SK-N-SH (cell line): ENCODE measurements at regions of chr2 and their contacts with region 1.

Region 1: DNA sequence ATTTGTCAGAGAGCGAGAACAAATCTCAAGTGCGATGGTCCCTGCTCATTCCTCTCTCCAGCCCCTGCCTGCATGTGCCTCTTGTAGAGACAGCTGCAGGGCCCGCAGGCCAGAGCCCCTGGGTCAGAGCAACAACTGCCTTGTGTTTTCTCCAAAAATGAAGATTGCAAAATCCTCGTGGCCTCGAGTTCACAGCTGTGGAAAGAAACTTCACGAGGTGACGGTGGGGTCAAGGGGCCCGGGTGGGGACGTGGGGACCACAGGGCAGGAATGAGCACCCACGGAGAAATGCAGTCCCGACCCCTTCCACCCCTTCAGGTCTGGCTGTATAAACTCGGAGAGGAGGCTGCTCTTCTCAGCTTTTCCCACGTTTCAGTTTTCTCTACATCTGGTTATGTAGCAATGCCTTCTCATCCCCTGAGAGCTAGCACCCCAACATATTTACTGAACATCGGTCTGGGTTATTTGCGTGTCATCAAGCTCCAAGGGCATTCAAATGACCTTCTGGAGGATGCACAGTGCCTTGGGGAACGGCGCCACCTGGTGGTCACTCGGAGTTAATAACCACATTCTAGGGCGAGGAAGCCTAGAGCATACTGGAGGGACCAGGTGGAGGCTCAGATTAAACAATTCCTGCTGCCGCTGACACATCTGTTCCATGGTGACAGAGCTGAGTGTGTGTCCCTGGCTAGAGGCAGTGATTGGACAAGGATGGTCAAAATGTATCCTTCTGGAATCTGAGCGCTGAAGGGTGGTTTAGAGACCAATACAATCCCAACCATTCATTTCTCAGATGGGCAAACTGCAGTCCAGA is 91.4 kb upstream of the CYRIA start:
- DNase-seq: peak; percentile 79
- H3K4me3 ChIP-seq: peak overlapping the region in 1 of 2 experiments; percentile 27; a peak in 1 of 4 replicates
- H3K27ac ChIP-seq: no peak overlapping the region
- H3K4me1 ChIP-seq: peaks cover 0 to 4% of the 10 kb centered on the region in 2 experiments; a peak in 1 of 4 replicates
- H3K27me3 ChIP-seq: no peaks in the 10 kb centered on the region
- CTCF ChIP-seq: peak; percentile 95
- EP300 ChIP-seq: no peak
- RAD21 ChIP-seq: peak; percentile 99

Region 2: DNA sequence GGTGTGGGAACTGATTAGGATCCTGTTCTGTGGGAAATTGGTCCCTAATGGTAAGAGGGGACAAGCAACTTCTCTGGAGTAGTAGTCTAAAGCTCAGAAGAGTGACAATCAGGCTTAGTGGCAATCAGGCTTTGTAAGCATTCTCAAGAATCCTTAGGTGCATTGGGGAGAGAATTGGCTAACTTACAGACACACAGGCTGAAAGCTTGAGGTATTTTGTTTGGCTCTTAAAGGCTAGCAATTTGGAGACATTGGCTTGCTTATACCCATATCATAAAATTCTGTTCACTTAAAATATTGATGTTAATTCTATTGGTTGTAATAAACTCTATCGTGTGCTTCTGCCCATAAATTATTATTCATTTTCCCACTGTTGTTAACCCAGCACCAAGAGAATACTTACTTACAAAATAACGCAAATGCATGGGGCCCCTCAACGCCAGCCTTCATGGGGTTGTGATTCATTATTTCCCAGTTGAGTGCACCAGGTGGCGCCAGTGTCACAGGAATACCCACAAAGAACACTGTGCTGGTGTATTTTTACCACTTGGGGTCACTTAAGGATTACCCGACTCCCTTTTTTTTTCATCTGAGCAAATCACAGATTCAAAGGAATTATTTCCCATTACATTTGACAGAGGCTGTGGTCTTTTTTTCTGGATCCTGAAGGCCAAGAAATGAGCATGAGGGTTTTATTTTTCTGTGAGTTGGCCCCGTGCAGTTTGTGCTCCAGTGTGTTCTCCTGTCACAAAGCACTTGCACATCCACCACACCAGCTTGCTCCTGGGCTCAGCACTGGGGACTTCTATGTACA is 1119.9 kb before region 1 on chr2:
- CTCF ChIA-PET with region 1: interaction called, 11 read pairs
- POLR2A ChIA-PET with region 1: no interaction called
- DNase-seq: peak; percentile 87
- H3K4me3 ChIP-seq: no peak overlapping the region; a peak in 1 of 4 replicates
- H3K27ac ChIP-seq: peak overlapping the region in 1 of 2 experiments; percentile 70; a peak in 2 of 4 replicates
- H3K4me1 ChIP-seq: peaks cover 5 to 8% of the 10 kb centered on the region in 2 experiments; a peak in 1 of 4 replicates
- H3K27me3 ChIP-seq: no peaks in the 10 kb centered on the region
- CTCF ChIP-seq: peak; percentile 98
- EP300 ChIP-seq: no peak
- RAD21 ChIP-seq: peak; percentile 100

Region 3: DNA sequence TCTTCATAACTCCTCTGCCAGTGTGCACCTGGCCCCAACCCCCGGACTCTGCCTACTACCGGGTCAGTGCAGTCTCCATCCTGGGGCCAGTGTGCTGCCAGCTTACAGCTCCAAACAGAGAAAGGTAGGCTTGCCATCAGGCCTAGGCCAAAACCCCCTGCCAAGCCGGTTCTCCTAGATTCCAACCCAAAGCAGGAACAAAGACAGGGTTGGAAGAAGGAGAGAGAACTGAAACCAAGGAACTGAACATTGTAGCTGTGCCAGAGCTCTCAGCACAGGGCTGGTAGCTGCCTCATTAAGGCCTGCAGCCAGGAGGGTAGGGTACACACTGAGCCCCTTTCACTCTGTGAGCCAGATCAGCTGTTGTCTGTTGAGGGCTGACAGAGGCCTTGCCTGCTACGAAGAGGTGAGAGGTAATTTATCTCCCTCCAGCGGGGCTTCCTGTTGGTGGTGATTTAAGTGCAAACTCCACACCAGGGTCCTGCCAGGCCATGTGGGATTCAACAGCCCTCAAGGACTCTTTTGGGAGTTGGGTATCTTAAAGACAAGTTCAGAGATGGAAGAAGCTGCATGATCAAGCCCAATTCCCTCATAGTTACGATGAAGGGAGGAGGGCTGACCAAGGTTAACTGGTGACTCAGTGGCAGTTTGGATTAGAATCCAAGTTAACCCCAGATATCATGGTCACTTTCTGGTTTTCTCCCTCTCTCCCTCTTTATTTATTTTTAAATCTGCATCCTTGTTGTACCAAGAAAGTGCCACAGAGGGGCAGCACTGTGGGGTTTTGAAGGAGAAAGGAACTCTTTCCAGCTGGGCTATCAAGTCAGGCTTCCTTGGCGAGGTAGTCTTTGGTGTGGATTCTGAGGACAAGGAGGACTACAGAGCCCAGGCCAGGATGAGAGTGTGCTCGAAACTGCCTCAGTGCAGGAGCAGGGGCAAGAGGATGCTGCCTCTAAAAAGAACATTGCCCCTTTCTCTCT is 139.5 kb before region 1 on chr2:
- CTCF ChIA-PET with region 1: interaction called, 341 read pairs
- POLR2A ChIA-PET with region 1: interaction called, 12 read pairs
- DNase-seq: peak; percentile 56
- H3K4me3 ChIP-seq: no peak overlapping the region
- H3K27ac ChIP-seq: no peak overlapping the region
- H3K4me1 ChIP-seq: peaks cover 0 to 6% of the 10 kb centered on the region in 2 experiments; a peak in 2 of 4 replicates
- H3K27me3 ChIP-seq: no peaks in the 10 kb centered on the region; the same call in 1 of the 2 replicates
- CTCF ChIP-seq: peak; percentile 59
- EP300 ChIP-seq: no peak
- RAD21 ChIP-seq: peak; percentile 69

Region 4: DNA sequence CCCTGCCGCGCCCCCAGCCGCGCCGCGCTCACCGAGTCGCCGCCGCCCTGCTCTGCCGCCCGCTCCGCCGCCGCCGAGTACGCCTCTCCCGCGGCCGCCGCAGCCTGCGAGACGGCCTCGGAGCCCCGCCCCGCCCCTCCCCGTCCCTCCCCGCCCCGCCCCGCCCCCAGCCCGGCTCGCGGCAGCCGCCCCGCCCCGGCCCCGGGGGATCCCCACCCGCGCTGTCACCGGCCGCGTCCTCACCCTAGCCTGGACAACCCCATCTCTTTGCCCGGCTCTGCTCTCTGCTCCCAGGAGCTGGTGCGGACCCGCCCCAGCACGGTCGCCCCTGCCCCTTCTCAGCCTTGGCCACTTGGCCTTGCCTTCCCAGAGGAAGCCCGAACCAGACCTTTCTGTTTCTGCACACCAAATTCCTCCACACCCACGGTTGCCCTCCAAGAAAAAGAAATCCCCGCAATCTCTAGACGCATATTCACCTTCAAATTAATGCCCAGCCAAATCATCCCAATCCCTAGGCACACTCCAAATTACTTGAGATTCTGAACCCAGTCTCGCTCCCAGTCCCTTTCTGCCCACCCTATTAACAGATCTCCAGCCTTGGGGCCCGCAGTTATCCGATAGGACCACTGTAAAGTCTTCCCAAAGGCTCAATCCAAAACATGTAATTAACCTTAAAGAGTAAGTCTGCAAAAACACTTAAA is 91.1 kb before region 1 on chr2 and contains the start of gene CYRIA:
- CTCF ChIA-PET with region 1: interaction called, 48 read pairs
- POLR2A ChIA-PET with region 1: no interaction called
- DNase-seq: peak; percentile 91
- H3K4me3 ChIP-seq: peak within 1 kb of the TSS; percentile 49 to 57
- H3K27ac ChIP-seq: peak within 1 kb of the TSS in 1 of 2 experiments; percentile 53; a peak in 1 of 4 replicates
- H3K4me1 ChIP-seq: peaks cover 4 to 33% of the 10 kb centered on the region in 2 experiments; a peak in 2 of 4 replicates
- H3K27me3 ChIP-seq: peaks cover 13% of the 10 kb centered on the region; the same call in 1 of the 2 replicates
- CTCF ChIP-seq: no peak
- EP300 ChIP-seq: no peak
- RAD21 ChIP-seq: no peak
- polyA plus RNA-seq, gene CYRIA: 0.08 and 0.13 TPM in 2 replicates

Region 5: DNA sequence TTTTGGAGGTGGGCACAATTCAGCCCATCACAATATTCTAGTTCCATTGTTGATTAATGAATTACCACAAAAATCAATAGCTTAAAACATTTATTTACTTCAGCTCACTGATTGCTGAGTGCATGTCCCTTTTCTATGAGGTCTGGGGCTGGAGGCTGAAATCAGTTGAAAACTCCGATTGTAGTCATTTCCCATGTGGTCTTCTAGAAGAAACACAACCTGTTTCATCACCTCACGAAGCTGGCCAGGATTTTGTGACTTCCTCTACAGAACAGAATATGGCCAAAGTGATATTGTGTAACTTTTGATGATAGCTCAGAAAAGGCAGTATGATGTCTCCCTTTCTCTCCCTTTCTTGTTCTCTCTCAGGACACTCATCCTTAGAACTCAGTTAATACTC is 47.3 kb before region 1 on chr2:
- CTCF ChIA-PET with region 1: interaction called, 13 read pairs
- POLR2A ChIA-PET with region 1: no interaction called
- DNase-seq: no peak
- H3K4me3 ChIP-seq: no peak overlapping the region
- H3K27ac ChIP-seq: no peak overlapping the region
- H3K4me1 ChIP-seq: no peaks in the 10 kb centered on the region; a peak in 2 of 4 replicates
- H3K27me3 ChIP-seq: no peaks in the 10 kb centered on the region
- CTCF ChIP-seq: no peak
- EP300 ChIP-seq: no peak
- RAD21 ChIP-seq: no peak

Region 6: GRCh38 chr2:16745466-16745865 is 11.6 kb before region 1 on chr2:
- CTCF ChIA-PET with region 1: interaction called, 119 read pairs
- POLR2A ChIA-PET with region 1: no interaction called
- DNase-seq: no peak
- H3K4me3 ChIP-seq: no peak overlapping the region
- H3K27ac ChIP-seq: no peak overlapping the region
- H3K4me1 ChIP-seq: no peaks in the 10 kb centered on the region
- H3K27me3 ChIP-seq: no peaks in the 10 kb centered on the region
- CTCF ChIP-seq: no peak
- EP300 ChIP-seq: no peak
- RAD21 ChIP-seq: no peak

Region 7: DNA sequence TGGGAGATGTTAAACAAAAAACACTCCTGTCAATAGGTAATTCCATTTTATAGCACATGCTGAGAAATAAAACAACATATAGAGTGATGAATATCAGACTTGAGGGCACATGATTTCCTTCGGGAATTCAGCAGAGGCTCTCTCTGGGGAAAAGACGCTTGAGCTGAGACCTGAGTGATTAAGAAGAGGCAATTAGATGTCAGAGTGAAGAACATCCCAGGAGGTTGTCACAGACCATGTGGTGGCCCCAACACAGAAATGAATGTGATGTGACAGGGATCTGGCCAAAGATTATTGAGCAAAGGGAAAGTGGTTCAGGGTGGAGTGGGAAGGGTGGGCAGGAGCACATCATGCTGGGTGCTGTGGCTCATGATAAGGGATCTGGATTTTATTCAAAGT is 506.5 kb after region 1 on chr2:
- CTCF ChIA-PET with region 1: no interaction called
- POLR2A ChIA-PET with region 1: no interaction called
- DNase-seq: no peak
- H3K4me3 ChIP-seq: no peak overlapping the region
- H3K27ac ChIP-seq: no peak overlapping the region
- H3K4me1 ChIP-seq: no peaks in the 10 kb centered on the region
- H3K27me3 ChIP-seq: no peaks in the 10 kb centered on the region
- CTCF ChIP-seq: no peak
- EP300 ChIP-seq: no peak
- RAD21 ChIP-seq: no peak